WTC11 (cell line): ENCODE measurements at regions of chr2 and their contacts with region 1.

Region 1: GRCh38 chr2:127649684-127650040 is 3.7 kb downstream of the GPR17 start:
- DNase-seq: peak; percentile 88
- ATAC-seq: peak; percentile 74
- H3K4me3 Mint-ChIP-seq: no peak overlapping the region
- H3K27ac Mint-ChIP-seq: no peak overlapping the region
- H3K4me1 Mint-ChIP-seq: peaks cover 9% of the 10 kb centered on the region
- H3K27me3 Mint-ChIP-seq: peaks cover 2% of the 10 kb centered on the region; the same call in 1 of the 2 replicates
- CTCF ChIP-seq: peak; percentile 72

Region 2: DNA sequence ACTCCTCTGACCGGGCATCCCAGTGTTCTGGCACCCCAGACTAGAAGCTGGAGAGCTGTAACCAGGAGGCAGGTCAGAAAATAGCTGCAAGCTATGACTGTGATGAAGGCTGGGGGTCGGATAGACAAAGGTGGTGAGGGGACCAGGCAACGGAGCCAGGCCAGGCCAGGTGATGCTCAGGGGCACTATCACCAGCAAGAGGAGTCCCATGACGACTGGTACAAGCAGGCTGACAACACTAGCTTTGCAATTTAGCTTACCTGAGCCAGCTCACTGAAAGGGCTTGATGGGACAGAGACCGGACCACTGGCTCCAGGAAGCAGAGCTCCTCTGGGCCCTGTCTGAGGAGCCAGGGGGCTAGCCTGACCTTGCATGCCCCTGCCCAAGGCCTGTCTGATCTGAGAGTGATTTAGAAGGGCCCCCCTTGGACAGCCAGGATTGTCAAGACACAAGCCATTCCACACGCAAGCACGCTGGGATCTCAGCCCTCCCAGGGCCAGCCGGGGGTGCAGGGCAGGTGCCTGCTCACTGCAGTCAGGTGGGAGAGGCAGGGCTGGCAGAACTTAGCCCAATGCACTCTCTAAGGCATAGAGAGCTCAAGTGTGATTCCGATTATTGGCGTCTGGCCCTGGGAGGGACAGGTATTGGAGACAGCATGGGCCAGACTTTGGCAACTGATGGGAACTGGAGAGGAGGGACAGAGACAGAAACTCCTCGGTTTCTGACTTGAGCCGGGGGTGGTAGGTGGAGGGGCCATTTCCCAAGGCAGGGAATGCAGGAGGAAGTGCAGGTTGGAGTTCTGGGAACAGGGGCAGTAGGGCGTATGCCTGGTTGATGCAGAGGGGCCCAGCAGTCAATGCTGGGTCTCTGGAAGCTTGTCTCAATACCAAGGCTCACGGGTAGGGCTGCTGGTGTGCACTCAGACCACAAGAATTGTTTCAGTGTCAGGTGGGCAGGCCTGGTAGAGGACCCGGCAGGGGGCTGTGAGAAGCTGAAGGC is 66.5 kb before region 1 on chr2:
- CTCF ChIA-PET with region 1: interaction called, 10 read pairs
- POLR2A ChIA-PET with region 1: no interaction called
- DNase-seq: no peak
- ATAC-seq: no peak
- H3K4me3 Mint-ChIP-seq: no peak overlapping the region
- H3K27ac Mint-ChIP-seq: no peak overlapping the region
- H3K4me1 Mint-ChIP-seq: peaks cover 13% of the 10 kb centered on the region
- H3K27me3 Mint-ChIP-seq: no peaks in the 10 kb centered on the region; the same call in 1 of the 2 replicates
- CTCF ChIP-seq: no peak

Region 3: DNA sequence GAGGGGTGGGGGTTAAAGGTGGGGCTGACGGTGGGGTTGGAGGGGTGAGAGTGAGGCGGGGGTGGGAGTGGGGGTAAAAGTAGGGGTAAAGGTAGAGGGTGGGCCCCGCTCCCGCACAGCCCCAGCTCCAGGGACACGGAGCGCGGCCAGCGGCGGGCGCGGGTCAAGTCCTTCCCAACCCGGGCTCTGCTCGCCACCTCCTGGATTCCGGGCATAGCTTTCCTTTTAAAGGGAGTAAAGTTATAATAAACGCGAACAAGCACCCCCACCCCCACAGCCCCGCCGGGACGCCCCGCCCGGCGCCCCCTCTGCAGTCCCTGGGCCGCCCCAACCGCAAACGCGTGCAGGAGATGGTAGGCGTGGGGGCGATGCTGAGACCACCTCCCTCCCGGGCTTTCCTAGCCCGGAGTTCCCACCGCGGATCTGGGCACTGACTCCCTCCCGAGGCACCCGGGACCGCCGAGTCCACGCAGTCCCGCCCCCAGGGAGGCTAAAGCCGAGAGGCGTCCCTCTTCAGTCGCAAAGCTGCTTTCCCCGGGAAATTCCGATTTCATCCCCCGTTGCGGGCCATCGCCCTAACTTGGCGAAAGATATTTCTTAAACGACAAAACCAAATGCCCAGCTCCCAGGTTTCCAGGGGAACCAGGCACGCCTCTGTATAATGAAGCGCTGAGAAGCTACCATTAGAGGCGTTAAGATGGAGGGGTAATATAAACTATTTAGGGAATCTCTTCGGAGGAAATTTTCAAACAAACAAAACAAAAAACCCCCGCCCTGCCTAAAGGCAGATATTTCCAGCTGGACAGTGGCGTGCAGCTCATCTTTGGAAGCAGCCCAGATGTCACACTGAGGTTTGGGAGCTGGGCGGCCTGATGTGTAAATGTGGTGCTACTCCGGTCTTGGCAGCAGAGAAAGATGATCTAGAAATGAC is 25.9 kb after region 1 on chr2 and contains the start of gene LIMS2:
- CTCF ChIA-PET with region 1: interaction called, 24 read pairs
- POLR2A ChIA-PET with region 1: no interaction called
- DNase-seq: peak; percentile 52
- ATAC-seq: peak; percentile 57
- H3K4me3 Mint-ChIP-seq: peak within 1 kb of the TSS; percentile 79
- H3K27ac Mint-ChIP-seq: no peak within 1 kb of the TSS
- H3K4me1 Mint-ChIP-seq: peaks cover 9% of the 10 kb centered on the region
- H3K27me3 Mint-ChIP-seq: peaks cover 61% of the 10 kb centered on the region
- CTCF ChIP-seq: no peak
- total RNA-seq, gene LIMS2: 1.9 to 2.5 TPM (median 2.4 TPM) in 3 replicates

Region 4: GRCh38 chr2:127681288-127681804 is 31.7 kb after region 1 on chr2:
- CTCF ChIA-PET with region 1: interaction called, 24 read pairs
- POLR2A ChIA-PET with region 1: no interaction called
- DNase-seq: no peak
- ATAC-seq: peak; percentile 55
- H3K4me3 Mint-ChIP-seq: no peak overlapping the region
- H3K27ac Mint-ChIP-seq: no peak overlapping the region
- H3K4me1 Mint-ChIP-seq: no peaks in the 10 kb centered on the region
- H3K27me3 Mint-ChIP-seq: peaks cover 23% of the 10 kb centered on the region
- CTCF ChIP-seq: no peak